CD4-positive, alpha-beta T cell (primary cell): ENCODE measurements at regions of chr12 and their contacts with region 1.

Region 1: DNA sequence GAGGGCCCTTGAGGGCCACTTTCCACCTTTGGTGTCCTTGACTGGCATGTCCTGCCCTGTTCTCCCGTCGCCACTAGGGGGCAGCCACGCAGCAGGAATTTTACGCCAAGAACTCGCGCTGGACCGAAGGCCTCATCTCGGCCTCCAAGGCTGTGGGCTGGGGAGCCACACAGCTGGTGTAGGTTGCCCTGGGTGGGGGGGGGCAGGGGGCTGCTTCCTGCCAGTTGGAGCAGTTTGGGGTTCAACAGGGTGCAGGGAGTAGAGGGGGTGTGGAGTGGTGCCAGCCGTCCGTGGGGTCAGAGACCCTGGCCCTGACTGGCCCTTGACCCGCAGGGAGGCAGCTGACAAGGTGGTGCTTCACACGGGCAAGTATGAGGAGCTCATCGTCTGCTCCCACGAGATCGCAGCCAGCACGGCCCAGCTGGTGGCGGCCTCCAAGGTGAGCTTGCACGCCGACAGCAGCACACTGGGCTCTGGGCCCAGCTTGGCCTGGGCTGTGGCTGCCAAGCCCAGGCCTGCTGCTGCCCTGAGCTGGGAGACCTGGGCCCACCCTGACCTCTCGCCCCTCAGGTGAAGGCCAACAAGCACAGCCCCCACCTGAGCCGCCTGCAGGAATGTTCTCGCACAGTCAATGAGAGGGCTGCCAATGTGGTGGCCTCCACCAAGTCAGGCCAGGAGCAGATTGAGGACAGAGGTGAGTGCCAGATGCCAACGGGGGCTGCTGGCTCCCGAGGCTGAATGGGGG is 25.3 kb downstream of the HIP1R start:
- DNase-seq: peak; percentile 72 to 89 (median 79)
- ATAC-seq: peak; percentile 52
- H3K4me3 ChIP-seq: no peak overlapping the region
- H3K4me3 Mint-ChIP-seq: no peak overlapping the region
- H3K27ac ChIP-seq: no peak overlapping the region
- H3K27ac Mint-ChIP-seq: peak overlapping the region; percentile 61
- H3K4me1 ChIP-seq: peaks cover 9% of the 10 kb centered on the region
- H3K4me1 Mint-ChIP-seq: no peaks in the 10 kb centered on the region
- H3K27me3 ChIP-seq: no peaks in the 10 kb centered on the region
- H3K27me3 Mint-ChIP-seq: no peaks in the 10 kb centered on the region
- CTCF ChIP-seq: peak; percentile 78

Region 2: DNA sequence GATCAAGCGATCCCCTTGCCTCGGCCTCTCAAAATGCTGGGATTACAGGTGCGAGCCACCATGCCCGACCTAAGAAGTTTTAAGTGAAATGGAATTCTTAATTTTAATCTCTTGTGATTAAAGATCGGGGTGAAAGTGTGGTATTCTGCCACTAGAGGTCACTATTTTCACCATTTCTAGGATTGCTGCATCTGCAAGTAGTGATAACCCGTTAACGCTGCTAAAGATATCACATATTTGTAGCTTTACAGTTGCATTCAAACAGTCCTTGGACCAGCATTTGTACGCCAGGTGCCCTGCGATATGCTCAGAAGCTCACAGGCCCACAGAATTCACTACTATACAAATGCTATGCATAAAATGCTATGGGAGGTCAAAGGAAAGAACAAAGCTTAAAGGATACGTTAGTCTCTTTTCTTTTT is 66.8 kb before region 1 on chr12:
- CTCF ChIA-PET with region 1: interaction called, 5 read pairs
- POLR2A ChIA-PET with region 1: no interaction called
- intact Hi-C with region 1: loop called (anchors 1 to 2 kb)
- DNase-seq: peak in 5 of 14 experiments; percentile 18 to 76 (median 66)
- ATAC-seq: peak; percentile 87
- H3K4me3 ChIP-seq: no peak overlapping the region
- H3K4me3 Mint-ChIP-seq: no peak overlapping the region
- H3K27ac ChIP-seq: no peak overlapping the region
- H3K27ac Mint-ChIP-seq: no peak overlapping the region
- H3K4me1 ChIP-seq: peaks cover 7% of the 10 kb centered on the region
- H3K4me1 Mint-ChIP-seq: no peaks in the 10 kb centered on the region
- H3K27me3 ChIP-seq: no peaks in the 10 kb centered on the region
- H3K27me3 Mint-ChIP-seq: no peaks in the 10 kb centered on the region
- CTCF ChIP-seq: peak; percentile 88